Caco-2 (cell line): ENCODE measurements at regions of chr10 and their contacts with region 1.

Region 1: DNA sequence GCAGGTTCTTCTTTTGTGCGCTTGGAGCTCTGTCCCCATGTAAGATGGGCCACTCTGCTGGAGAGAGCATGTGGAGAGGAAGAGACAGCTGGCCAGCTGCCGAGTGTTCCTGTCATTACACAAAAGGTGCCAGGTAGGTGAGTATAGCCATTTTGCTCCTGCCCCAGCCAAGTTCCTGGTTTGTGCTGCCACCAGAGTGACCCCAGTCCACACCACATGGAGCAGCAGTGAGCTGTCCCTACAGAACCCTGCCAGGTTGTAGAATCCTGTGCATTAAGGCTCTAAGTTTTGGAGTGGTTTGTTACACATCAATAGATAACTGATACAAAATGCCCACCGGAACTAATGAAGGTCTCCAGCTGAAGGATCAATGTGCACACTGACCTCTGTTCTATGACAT is 84.6 kb upstream of the GHITM start:
- DNase-seq: no peak
- H3K4me3 ChIP-seq: no peak overlapping the region
- H3K4me3 Mint-ChIP-seq: no peak overlapping the region
- H3K27ac Mint-ChIP-seq: no peak overlapping the region
- H3K4me1 ChIP-seq: no peaks in the 10 kb centered on the region
- H3K4me1 Mint-ChIP-seq: peaks cover 5% of the 10 kb centered on the region
- H3K27me3 ChIP-seq: no peaks in the 10 kb centered on the region
- H3K27me3 Mint-ChIP-seq: peaks cover 16% of the 10 kb centered on the region
- CTCF ChIP-seq: peak in 1 of 2 experiments; percentile 14

Region 2: DNA sequence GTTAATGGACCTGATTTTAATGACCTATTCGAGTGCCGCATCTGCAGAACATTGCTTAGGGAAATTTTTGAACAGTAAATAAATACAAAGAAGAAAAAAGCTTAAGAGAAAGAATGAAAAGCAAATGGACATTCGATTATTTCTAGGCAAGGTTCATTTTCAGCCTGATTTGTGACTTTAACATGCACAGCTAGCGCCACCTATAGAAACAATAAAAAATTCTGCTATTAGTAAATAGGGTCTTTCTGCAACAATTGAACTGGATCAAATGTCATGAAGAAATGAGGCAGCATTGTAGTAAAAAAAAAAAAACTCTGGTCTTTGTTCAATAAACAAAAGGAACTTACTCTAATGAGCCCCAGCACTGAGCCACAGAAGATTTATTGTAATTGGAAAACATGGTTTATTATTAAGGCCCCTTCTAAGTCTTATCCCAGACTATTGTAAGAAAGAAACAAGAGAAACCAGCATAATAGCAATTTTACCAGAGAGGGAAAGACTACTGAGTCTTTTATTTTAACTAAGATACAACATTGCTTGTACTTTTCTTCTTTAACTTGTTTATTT is 43.1 kb after region 1 on chr10:
- CTCF ChIA-PET with region 1: no interaction called
- POLR2A ChIA-PET with region 1: no interaction called
- intact Hi-C with region 1: loop called (anchors 5 kb)
- DNase-seq: no peak
- H3K4me3 ChIP-seq: no peak overlapping the region
- H3K4me3 Mint-ChIP-seq: no peak overlapping the region
- H3K27ac Mint-ChIP-seq: no peak overlapping the region
- H3K4me1 ChIP-seq: no peaks in the 10 kb centered on the region
- H3K4me1 Mint-ChIP-seq: no peaks in the 10 kb centered on the region
- H3K27me3 ChIP-seq: no peaks in the 10 kb centered on the region
- H3K27me3 Mint-ChIP-seq: peaks cover 11% of the 10 kb centered on the region
- CTCF ChIP-seq: peak; percentile 47 to 70

Region 3: GRCh38 chr10:84126785-84127167 is 72.0 kb after region 1 on chr10:
- CTCF ChIA-PET with region 1: no interaction called
- POLR2A ChIA-PET with region 1: no interaction called
- intact Hi-C with region 1: no loop called
- DNase-seq: no peak
- H3K4me3 ChIP-seq: no peak overlapping the region
- H3K4me3 Mint-ChIP-seq: no peak overlapping the region
- H3K27ac Mint-ChIP-seq: no peak overlapping the region
- H3K4me1 ChIP-seq: no peaks in the 10 kb centered on the region
- H3K4me1 Mint-ChIP-seq: no peaks in the 10 kb centered on the region
- H3K27me3 ChIP-seq: no peaks in the 10 kb centered on the region
- H3K27me3 Mint-ChIP-seq: peaks cover 2% of the 10 kb centered on the region
- CTCF ChIP-seq: no peak

Region 4: DNA sequence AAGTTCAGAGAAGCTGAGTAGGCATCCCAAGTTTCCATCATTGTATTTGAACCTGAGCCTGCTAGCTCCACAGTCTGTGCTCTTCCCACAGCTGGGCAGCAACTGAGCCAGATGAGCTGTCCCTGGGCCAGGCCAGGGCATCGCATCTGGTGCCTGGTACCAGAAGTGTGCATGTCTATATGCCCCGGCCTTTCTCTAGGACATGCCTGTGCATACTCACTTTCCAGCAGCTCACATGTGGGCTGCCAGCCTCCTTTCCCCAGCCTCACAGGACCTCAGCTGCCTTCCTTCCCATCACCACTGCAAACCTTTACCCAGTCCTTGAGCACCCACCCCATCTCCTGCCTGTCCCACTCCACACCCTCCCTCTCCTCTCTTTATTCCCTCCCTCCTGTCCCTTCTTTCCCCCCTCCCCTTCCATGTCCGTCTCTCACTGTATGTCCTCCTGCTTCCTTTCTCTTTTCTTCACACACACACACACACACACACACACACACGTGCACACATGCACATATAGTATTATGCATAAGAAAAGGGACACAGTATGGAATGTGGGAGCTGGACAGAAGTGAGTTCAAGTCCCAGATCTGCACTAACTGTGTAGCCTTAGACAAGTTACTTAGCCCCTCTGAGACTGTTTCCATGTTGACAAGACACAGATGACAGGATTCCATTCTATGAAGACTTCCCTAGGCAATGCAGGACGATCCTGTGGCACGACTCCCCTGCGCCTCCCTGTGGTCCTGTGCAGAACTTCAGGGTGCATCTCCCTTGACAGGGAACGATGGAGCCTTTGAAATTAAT is 150.5 kb after region 1 on chr10:
- CTCF ChIA-PET with region 1: no interaction called
- POLR2A ChIA-PET with region 1: no interaction called
- intact Hi-C with region 1: loop called (anchors 1 kb)
- DNase-seq: peak; percentile 59 to 70
- H3K4me3 ChIP-seq: no peak overlapping the region
- H3K4me3 Mint-ChIP-seq: no peak overlapping the region
- H3K27ac Mint-ChIP-seq: no peak overlapping the region
- H3K4me1 ChIP-seq: no peaks in the 10 kb centered on the region
- H3K4me1 Mint-ChIP-seq: no peaks in the 10 kb centered on the region
- H3K27me3 ChIP-seq: no peaks in the 10 kb centered on the region; the same call in 1 of the 2 replicates
- H3K27me3 Mint-ChIP-seq: peaks cover 28% of the 10 kb centered on the region
- CTCF ChIP-seq: peak; percentile 74 to 88